Pancreas (tissue), 10 donors: ENCODE measurements at regions of chr17 and their contacts with region 1.

Region 1: GRCh38 chr17:37752482-37752881 is 7.6 kb upstream of the HNF1B start:
- DNase-seq: no peak
- ATAC-seq: peak in 3 of 4 donors; percentile 25 to 44 (median 36)
- H3K4me3 ChIP-seq: no peak overlapping the region
- H3K27ac ChIP-seq: no peak overlapping the region
- H3K4me1 ChIP-seq: peaks cover 4 to 19% (median 14%) of the 10 kb centered on the region in 3 donors
- H3K27me3 ChIP-seq: no peaks in the 10 kb centered on the region
- CTCF ChIP-seq: no peak

Region 2: GRCh38 chr17:37643118-37643766 is 109.2 kb before region 1 on chr17 and contains the start of gene DDX52:
- intact Hi-C with region 1: loop called in 1 of 3 experiments (anchors 10 kb)
- DNase-seq: peak; percentile 93 to 98 (median 94)
- ATAC-seq: peak; percentile 96 to 99 (median 98)
- H3K4me3 ChIP-seq: peak within 1 kb of the TSS; percentile 62 to 90 (median 70)
- H3K27ac ChIP-seq: peak within 1 kb of the TSS; percentile 59 to 83 (median 70)
- H3K4me1 ChIP-seq: peaks cover 4 to 22% (median 17%) of the 10 kb centered on the region in 3 donors
- H3K27me3 ChIP-seq: no peaks in the 10 kb centered on the region
- CTCF ChIP-seq: no peak
- total RNA-seq, gene DDX52: 9.5 to 21.4 (median 11.1) TPM